ENCODE measurements at regions of chr2 and their contacts with region 1.

Region 1: DNA sequence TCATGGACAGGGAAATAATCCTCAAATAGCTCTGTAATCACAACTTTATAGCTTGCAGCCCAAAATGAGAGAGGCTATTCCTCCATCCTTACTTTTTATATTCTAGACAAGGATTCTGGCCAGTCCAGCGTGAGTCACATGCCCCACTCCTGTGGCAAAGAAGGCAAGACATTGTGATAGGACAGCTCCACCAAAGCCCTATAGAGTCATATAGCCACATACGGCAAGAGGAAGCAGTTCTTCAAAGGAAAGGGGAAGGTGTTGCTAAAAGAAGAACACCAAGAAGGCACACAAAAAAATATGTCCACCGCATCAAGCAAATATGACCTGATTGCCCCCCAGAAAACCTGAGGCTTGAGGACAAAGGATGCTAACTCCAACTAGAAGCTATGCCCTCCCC is 3.4 kb upstream of the GFPT1 start:
- H3K4me3 Mint-ChIP-seq: no peak overlapping the region
- H3K27ac Mint-ChIP-seq: peak overlapping the region; percentile 84
- H3K4me1 Mint-ChIP-seq: peaks cover 34% of the 10 kb centered on the region
- H3K27me3 Mint-ChIP-seq: no peaks in the 10 kb centered on the region

Region 2: GRCh38 chr2:69436938-69437750 is 46.7 kb after region 1 on chr2 and contains the start of gene NFU1:
- intact Hi-C with region 1: loop called (anchors 5 kb)
- H3K4me3 Mint-ChIP-seq: peak within 1 kb of the TSS; percentile 88
- H3K27ac Mint-ChIP-seq: peak within 1 kb of the TSS; percentile 99
- H3K4me1 Mint-ChIP-seq: peaks cover 29% of the 10 kb centered on the region
- H3K27me3 Mint-ChIP-seq: no peaks in the 10 kb centered on the region

Measured in dendritic cell treated with granulocyte-macrophage colony-stimulating factor and Interleukin-4, amounts not matched to agents 40 ng/mL and 50 ng/mL, for 4 days (primary cell).